Colonic mucosa (tissue), 4 donors: ENCODE measurements at regions of chr19 and their contacts with region 1.

Region 1: GRCh38 chr19:7340959-7341837 is 7.5 kb upstream of the ARHGEF18 start:
- DNase-seq: peak; percentile 89
- H3K4me3 ChIP-seq: no peak overlapping the region
- H3K27ac ChIP-seq: no peak overlapping the region
- H3K4me1 ChIP-seq: no peaks in the 10 kb centered on the region
- H3K27me3 ChIP-seq: no peaks in the 10 kb centered on the region
- CTCF ChIP-seq: peak; percentile 93

Region 2: GRCh38 chr19:7101498-7102253 is 239.5 kb before region 1 on chr19:
- intact Hi-C with region 1: loop called (anchors 2 kb)
- DNase-seq: no peak
- H3K4me3 ChIP-seq: no peak overlapping the region
- H3K27ac ChIP-seq: no peak overlapping the region
- H3K4me1 ChIP-seq: no peaks in the 10 kb centered on the region
- H3K27me3 ChIP-seq: no peaks in the 10 kb centered on the region
- CTCF ChIP-seq: no peak

Region 3: GRCh38 chr19:7500811-7501450 is 159.7 kb after region 1 on chr19:
- intact Hi-C with region 1: no loop called
- DNase-seq: peak; percentile 77
- H3K4me3 ChIP-seq: peak overlapping the region; percentile 35
- H3K27ac ChIP-seq: no peak overlapping the region
- H3K4me1 ChIP-seq: peaks cover 6% of the 10 kb centered on the region
- H3K27me3 ChIP-seq: peaks cover 16% of the 10 kb centered on the region
- CTCF ChIP-seq: no peak